Activated naive CD4-positive, alpha-beta T cell treated with anti-CD3 and anti-CD28 coated beads for 36 hours (primary cell): ENCODE measurements at regions of chr3 and their contacts with region 1.

Region 1: DNA sequence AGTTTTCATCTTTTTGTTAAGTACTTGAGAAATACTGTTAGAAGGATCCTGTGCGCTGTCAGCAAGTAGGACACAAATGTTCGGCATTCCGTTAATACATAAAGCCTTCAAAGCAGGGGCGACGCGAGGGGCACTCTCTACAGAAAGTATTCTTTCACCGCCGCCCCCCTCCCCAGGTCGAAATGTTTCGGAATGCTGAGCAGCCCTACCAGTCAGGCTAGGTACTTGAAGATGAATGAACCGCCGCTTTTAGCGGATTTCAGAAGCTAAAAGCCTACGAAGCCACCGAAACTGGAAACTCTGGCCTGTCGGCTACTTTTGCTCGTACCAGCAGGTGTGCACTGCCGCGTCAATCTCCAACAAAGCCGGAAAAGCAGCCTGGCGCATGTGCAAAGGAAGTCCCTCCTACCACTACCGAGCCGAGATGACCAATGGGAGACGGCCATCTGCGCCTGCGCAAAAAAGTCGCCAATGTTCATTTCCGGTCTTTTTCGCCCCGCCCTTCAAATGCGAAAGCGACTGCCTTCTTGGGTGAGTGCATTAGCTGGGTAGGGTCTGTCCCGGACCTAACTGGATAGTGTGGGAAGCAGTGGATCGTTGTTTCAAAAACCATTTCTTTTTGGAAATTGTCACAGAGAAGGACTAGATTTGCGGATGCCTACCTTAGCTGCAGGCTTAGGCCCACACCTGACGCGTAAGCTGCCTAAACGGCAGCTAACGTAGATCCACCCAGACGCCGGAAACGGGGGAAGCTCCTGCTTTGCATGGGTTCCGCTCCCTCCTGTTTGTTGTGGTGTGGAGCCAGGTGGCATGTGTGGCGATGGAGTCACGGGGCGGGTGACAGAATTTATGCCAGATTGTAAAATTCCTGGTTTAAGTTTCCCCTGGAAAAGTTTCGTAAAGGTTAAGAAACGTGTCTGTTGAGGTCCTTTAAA is at the start of gene WDR5B:
- DNase-seq: peak; percentile 99
- H3K4me3 Mint-ChIP-seq: peak within 1 kb of the TSS; percentile 95
- H3K27ac Mint-ChIP-seq: peak within 1 kb of the TSS; percentile 98
- H3K4me1 Mint-ChIP-seq: peaks cover 50% of the 10 kb centered on the region
- H3K27me3 Mint-ChIP-seq: no peaks in the 10 kb centered on the region
- total RNA-seq, gene WDR5B: 2.3 to 2.9 TPM

Region 2: DNA sequence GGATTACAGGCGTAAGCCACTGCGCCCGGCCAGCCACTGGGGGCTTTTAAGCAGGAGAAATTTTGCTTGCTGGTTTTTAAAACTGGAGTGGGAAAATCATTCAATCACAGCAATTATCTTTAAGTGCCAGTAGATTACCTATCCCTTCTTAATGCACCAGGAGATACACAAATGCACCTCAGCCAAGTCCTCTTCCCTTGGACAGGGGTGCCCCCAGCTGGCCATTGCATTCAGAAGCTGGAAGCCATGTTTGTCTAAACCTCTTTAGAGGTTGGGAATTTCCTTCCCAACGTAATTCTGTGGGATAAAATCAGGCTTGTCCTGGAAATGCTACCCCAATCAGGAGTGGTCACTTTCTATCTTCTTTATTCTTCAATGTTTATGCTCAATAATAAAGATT is 59.6 kb before region 1 on chr3:
- CTCF ChIA-PET with region 1: no interaction called
- intact Hi-C with region 1: no loop called
- DNase-seq: peak; percentile 63
- H3K4me3 Mint-ChIP-seq: no peak overlapping the region
- H3K27ac Mint-ChIP-seq: no peak overlapping the region
- H3K4me1 Mint-ChIP-seq: peaks cover 2% of the 10 kb centered on the region
- H3K27me3 Mint-ChIP-seq: no peaks in the 10 kb centered on the region

Region 3: GRCh38 chr3:122383771-122384697 is 32.0 kb before region 1 on chr3 and contains the start of gene FAM162A:
- CTCF ChIA-PET with region 1: interaction called, 10 read pairs
- intact Hi-C with region 1: loop called (anchors 1 kb)
- DNase-seq: peak; percentile 93
- H3K4me3 Mint-ChIP-seq: peak within 1 kb of the TSS; percentile 90
- H3K27ac Mint-ChIP-seq: peak within 1 kb of the TSS; percentile 93
- H3K4me1 Mint-ChIP-seq: peaks cover 62% of the 10 kb centered on the region
- H3K27me3 Mint-ChIP-seq: no peaks in the 10 kb centered on the region
- total RNA-seq, gene FAM162A: 111 to 112 TPM

Region 4: DNA sequence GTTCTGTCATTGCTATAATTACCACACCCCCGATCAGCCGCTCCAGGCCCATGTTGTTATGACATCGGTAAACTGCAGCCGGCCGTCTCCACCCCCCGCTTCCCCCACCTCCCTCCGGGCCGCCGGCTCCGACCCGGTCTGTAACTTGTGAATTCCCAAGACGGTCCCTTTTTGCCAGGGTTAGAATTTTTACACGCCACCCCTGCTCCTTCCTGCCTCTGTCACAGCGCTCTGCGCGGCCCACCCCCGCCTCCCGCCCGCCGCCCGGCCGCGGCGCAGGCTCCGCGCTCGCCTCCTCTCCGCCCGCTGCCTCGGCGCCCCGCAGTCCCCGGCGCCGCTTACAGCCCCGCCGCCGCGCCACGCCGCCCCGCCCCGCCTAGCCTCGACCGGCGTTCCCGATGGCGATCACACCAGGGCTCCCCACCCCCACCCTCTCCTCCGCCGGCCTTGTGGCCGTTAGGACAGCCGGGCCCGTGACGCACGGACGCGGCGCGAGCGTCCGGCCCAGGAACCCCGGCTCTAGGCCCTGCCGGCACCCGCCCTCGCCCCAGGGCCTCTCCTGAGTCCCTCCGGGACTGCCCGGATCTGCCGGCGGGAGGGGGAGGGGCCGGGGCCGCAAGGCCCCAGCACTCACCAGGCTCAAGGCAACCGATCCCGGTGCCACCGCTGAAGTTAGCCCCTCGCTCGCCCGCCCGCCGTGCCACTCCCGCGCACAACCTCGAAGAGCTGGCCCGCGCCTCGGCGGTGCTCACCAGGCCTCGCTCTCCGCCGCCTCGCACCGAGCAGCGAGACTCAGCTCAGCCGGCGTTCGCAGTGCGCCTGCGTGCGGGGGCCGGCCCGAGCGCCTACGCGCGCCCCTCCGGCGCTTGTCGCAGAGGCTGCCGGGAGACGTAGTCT is 98.4 kb after region 1 on chr3 and contains the start of gene KPNA1:
- CTCF ChIA-PET with region 1: no interaction called
- intact Hi-C with region 1: loop called (anchors 1 kb)
- DNase-seq: peak; percentile 86
- H3K4me3 Mint-ChIP-seq: peak within 1 kb of the TSS; percentile 73
- H3K27ac Mint-ChIP-seq: peak within 1 kb of the TSS; percentile 77
- H3K4me1 Mint-ChIP-seq: peaks cover 42% of the 10 kb centered on the region
- H3K27me3 Mint-ChIP-seq: no peaks in the 10 kb centered on the region
- total RNA-seq, gene KPNA1: 45.6 to 45.8 TPM

Region 5: DNA sequence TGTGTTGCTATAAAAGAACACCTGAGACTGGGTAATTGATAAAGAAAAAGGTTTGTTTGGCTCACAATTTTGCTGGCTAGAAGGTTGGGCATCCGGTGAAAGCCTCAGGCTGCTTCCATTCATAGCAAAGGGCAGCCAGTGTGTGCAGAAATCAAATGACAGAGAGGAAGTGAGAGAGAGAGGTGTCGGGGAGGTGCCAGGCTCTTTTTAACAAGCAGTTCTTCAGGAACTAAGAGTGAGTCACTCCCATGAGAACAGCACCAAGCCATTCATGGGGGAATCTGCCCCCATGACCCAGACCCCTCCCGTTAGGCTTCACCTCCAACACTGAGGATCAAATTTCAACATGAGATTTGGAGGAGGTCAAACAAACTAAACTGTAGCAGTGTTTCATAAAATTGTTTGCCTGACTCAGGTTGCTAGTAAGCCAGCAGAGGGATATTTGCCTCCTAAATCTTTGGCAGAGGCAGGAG is 157.0 kb after region 1 on chr3:
- CTCF ChIA-PET with region 1: no interaction called
- intact Hi-C with region 1: loop called (anchors 2 kb)
- DNase-seq: peak; percentile 75
- H3K4me3 Mint-ChIP-seq: no peak overlapping the region
- H3K27ac Mint-ChIP-seq: peak overlapping the region; percentile 73
- H3K4me1 Mint-ChIP-seq: peaks cover 69% of the 10 kb centered on the region
- H3K27me3 Mint-ChIP-seq: no peaks in the 10 kb centered on the region

Region 6: GRCh38 chr3:122902326-122902725 is 486.3 kb after region 1 on chr3:
- CTCF ChIA-PET with region 1: no interaction called
- intact Hi-C with region 1: no loop called
- DNase-seq: no peak
- H3K4me3 Mint-ChIP-seq: no peak overlapping the region
- H3K27ac Mint-ChIP-seq: no peak overlapping the region
- H3K4me1 Mint-ChIP-seq: no peaks in the 10 kb centered on the region
- H3K27me3 Mint-ChIP-seq: peaks cover 2% of the 10 kb centered on the region

Region 7: DNA sequence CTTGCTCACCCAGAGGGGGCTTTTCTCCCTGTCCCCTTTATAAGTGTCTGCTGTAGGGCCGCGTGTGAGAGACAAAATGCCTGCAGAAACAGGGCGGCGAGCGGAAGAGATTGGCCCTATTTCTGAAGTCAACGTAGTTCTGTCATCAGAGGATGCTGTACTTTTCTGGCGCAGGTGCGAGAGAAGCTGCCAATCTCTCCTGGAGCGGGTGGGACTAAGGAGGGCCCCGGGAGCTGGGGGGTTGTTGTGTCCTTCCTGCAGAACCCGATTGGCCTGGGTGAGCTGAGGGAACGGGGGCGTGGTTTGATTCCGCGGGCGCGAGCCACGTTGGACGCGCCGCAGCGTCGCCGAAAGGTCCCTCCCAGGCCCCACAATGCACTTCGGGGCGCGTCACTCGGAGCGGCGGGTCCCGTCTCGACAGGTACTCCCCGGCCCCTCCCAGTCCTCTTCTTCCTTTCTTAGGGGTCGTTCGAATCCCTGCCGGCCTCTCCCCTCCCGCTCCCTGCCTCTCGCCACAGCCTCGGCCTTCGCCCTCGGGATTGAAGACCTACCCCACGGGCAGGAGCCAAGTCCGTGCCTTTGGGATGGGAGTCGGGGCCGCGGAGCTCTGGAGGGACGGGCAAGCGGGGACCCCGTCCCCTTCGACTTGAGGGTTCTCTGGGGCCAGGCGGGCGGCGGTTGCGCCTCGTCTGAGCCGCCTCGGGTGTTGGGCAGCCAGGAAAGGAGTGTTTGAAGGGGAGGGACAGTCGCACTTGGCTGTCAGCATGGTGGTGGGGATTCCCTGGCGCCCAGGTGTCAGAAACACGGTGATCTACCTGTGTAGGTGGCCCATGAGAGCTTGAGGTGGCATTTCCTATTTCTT is 785.8 kb after region 1 on chr3 and contains the start of gene SEC22A:
- CTCF ChIA-PET with region 1: no interaction called
- intact Hi-C with region 1: loop called (anchors 5 kb)
- DNase-seq: peak; percentile 98
- H3K4me3 Mint-ChIP-seq: peak within 1 kb of the TSS; percentile 95
- H3K27ac Mint-ChIP-seq: peak within 1 kb of the TSS; percentile 95
- H3K4me1 Mint-ChIP-seq: peaks cover 27% of the 10 kb centered on the region
- H3K27me3 Mint-ChIP-seq: no peaks in the 10 kb centered on the region
- total RNA-seq, gene SEC22A: 14.3 to 18.7 TPM